ENCODE measurements at regions of chr4 and their contacts with region 1.

Region 1: GRCh38 chr4:38213083-38213805 is 253.0 kb downstream of the PTTG2 start:
- DNase-seq: no peak
- CTCF ChIP-seq: no peak

Region 2: DNA sequence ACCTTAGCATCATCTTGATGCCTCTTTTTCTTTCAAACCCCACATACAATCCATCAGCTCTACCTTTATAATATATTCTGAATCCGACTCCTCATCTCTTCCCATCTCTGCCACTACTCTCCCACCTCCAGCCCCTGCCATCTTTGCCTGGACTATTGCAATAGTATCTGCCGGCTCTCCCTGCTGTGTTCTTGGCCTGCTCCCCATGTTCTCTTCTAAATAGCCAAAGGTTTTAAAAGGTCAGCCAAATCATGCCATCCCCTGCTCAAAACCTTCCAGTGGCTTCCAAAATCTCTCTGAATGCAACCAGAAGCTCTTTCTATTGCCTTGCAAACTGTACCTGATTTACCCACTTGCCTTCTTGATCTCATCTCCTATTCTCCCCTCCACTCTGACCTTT is 12.9 kb after region 1 on chr4:
- CTCF ChIA-PET with region 1: interaction called, 10 read pairs
- POLR2A ChIA-PET with region 1: no interaction called
- DNase-seq: no peak
- CTCF ChIP-seq: no peak

Measured in GM10248 (cell line).